Caco-2 (cell line): ENCODE measurements at regions of chr2 and their contacts with region 1.

Region 1: DNA sequence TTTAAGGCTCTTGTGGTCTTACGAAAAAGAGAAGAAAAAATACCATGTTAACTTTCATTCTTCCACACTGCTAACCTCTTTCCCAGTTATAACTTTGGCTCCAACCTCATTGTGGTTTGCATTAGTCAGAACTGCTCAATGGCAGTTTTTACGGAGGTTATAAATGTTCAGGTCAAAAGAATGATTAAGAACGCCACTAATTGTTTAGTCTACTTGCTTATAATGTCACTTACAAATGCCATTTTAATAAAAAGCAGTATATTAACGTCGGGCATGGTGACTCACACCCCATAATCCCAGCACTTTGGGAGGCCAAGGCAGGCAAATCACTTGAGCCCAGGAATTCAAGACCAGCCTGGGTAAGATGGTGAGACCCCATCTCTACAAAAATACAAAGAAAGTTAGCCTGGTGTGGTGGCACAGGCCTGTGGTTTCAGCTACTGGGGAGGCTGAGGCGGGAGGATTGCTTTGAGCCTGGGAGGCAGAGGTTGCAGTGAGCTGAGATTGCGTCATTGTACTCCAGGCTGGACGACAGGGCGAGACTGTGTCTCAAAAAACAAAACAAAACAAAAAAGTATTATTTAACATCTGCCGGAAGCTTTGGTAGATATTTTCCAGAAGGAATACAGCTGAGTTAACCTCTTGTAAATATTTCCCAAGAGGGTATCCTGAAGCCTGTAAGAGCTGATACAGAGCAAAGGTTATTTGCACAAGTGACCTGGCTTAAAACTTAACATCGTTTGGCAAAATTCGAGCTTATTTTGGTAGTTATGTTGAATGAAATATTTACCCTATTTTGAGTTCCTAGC is 5.1 kb downstream of the AGPS start:
- DNase-seq: peak; percentile 60 to 63
- H3K4me3 ChIP-seq: no peak overlapping the region
- H3K4me3 Mint-ChIP-seq: peak overlapping the region; percentile 10
- H3K27ac Mint-ChIP-seq: peak overlapping the region; percentile 58
- H3K4me1 ChIP-seq: peaks cover 60% of the 10 kb centered on the region
- H3K4me1 Mint-ChIP-seq: peaks cover 34% of the 10 kb centered on the region
- H3K27me3 ChIP-seq: no peaks in the 10 kb centered on the region
- H3K27me3 Mint-ChIP-seq: no peaks in the 10 kb centered on the region
- CTCF ChIP-seq: no peak

Region 2: DNA sequence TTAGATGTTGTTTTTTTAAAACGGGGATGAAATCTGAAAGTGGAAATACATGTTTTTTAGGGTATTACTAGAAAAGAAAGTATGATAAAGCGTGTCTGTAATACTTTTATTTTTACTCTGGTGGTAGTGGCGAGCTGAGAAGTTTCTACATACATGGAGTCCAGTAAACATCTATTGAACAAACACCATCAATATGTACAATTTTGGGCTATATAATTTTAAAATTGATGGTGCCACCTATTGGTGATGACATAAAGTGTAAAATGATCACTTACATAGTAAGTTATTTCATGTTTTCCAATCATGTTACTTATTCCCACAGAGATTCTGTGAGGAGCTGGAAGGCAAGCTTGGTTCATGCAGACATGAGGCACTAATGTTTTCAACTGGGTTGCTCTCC is 101.6 kb before region 1 on chr2:
- CTCF ChIA-PET with region 1: no interaction called
- POLR2A ChIA-PET with region 1: no interaction called
- intact Hi-C with region 1: no loop called
- DNase-seq: no peak
- H3K4me3 ChIP-seq: no peak overlapping the region
- H3K4me3 Mint-ChIP-seq: no peak overlapping the region
- H3K27ac Mint-ChIP-seq: no peak overlapping the region
- H3K4me1 ChIP-seq: peaks cover 3% of the 10 kb centered on the region; the same call in 1 of the 2 replicates
- H3K4me1 Mint-ChIP-seq: peaks cover 12% of the 10 kb centered on the region
- H3K27me3 ChIP-seq: no peaks in the 10 kb centered on the region
- H3K27me3 Mint-ChIP-seq: no peaks in the 10 kb centered on the region
- CTCF ChIP-seq: peak; percentile 19 to 21

Region 3: DNA sequence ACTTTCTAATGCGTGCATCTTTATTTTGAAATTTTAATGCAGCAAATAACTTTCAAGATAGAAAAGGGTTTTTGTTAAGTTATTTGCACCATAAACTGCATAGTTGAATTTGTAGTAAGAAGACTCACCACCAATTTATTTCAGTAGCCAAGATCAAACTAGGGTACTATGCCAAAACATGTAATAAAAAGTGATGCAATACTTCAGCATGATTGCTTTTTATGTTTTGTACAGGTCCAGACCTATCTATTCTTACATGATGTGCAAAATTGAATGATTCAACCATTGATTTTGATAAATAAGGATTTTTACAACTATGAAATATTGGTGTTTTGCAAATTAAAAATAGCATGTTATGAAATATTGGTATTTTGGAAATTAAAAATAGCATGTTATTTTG is 21.6 kb after region 1 on chr2:
- CTCF ChIA-PET with region 1: interaction called, 6 read pairs
- POLR2A ChIA-PET with region 1: no interaction called
- intact Hi-C with region 1: loop called (anchors 2 kb)
- DNase-seq: no peak
- H3K4me3 ChIP-seq: no peak overlapping the region
- H3K4me3 Mint-ChIP-seq: no peak overlapping the region
- H3K27ac Mint-ChIP-seq: peak overlapping the region; percentile 53
- H3K4me1 ChIP-seq: peaks cover 34% of the 10 kb centered on the region
- H3K4me1 Mint-ChIP-seq: peaks cover 29% of the 10 kb centered on the region
- H3K27me3 ChIP-seq: no peaks in the 10 kb centered on the region
- H3K27me3 Mint-ChIP-seq: no peaks in the 10 kb centered on the region
- CTCF ChIP-seq: no peak

Region 4: GRCh38 chr2:177429688-177430325 is 32.1 kb after region 1 on chr2:
- CTCF ChIA-PET with region 1: no interaction called
- POLR2A ChIA-PET with region 1: no interaction called
- intact Hi-C with region 1: loop called (anchors 2 kb)
- DNase-seq: no peak
- H3K4me3 ChIP-seq: no peak overlapping the region
- H3K4me3 Mint-ChIP-seq: no peak overlapping the region
- H3K27ac Mint-ChIP-seq: no peak overlapping the region
- H3K4me1 ChIP-seq: peaks cover 9% of the 10 kb centered on the region; the same call in 1 of the 2 replicates
- H3K4me1 Mint-ChIP-seq: peaks cover 7% of the 10 kb centered on the region
- H3K27me3 ChIP-seq: no peaks in the 10 kb centered on the region
- H3K27me3 Mint-ChIP-seq: no peaks in the 10 kb centered on the region
- CTCF ChIP-seq: no peak